MCF 10A (cell line): ENCODE measurements at regions of chr3 and their contacts with region 1.

Region 1: DNA sequence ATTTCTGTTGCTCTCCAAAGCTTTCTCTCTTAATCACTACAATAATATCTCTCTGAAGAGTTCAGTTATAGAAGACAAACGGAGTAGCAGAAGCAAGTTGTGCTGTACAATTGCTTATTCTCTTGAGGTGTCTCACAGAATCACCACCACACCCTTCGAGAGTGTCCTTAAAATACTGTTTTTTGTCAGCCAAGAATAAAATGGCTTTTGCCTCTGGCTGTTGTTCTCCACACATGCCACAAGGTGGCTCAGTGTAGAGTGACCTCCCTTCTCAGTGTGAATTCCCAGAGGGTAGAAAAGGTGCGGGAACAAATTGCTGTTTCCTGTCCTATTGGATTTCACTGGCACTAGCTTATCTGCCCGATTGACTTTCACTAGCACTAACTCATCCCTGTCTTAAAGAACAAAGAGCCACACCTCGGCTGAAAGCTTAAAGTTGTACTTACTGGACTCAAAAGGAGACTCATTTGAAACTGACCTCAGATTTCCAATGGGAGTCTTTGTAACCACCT is 134.2 kb upstream of the SATB1 start:
- DNase-seq: peak; percentile 72
- H3K4me3 Mint-ChIP-seq: no peak overlapping the region
- H3K27ac Mint-ChIP-seq: no peak overlapping the region
- H3K4me1 Mint-ChIP-seq: no peaks in the 10 kb centered on the region
- H3K27me3 Mint-ChIP-seq: peaks cover 45% of the 10 kb centered on the region
- CTCF ChIP-seq: peak; percentile 74

Region 2: DNA sequence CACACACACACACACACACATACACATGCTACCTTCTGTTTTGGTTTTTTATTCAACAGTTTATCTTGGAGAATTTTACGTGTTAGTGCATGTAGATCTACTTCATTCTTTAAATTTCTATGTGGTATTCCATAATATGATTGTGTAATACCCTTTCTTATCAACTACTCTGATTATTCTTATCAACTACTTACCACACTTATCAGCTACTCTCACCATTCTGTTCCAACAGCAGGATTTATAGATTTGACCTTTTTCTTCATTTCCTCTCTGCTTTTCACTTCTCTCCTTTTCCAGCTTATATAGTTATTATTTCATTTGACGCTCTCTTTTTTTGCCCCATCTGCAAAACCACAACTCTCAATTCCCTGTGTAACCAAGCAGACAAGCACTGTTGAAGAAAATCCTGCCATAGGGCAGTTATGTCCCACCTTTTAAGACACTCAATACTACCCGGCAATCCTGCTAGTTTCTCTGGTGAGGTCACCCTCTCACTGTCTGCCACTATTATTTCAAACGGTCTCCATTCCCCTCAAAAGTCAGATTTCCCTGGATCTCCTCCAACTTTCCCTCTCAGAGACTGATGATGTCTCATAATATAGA is 77.3 kb before region 1 on chr3:
- CTCF ChIA-PET with region 1: no interaction called
- POLR2A ChIA-PET with region 1: no interaction called
- intact Hi-C with region 1: no loop called
- DNase-seq: no peak
- H3K4me3 Mint-ChIP-seq: no peak overlapping the region
- H3K27ac Mint-ChIP-seq: peak overlapping the region; percentile 10
- H3K4me1 Mint-ChIP-seq: no peaks in the 10 kb centered on the region
- H3K27me3 Mint-ChIP-seq: peaks cover 30% of the 10 kb centered on the region
- CTCF ChIP-seq: no peak

Region 3: GRCh38 chr3:18527691-18528090 is 31.7 kb before region 1 on chr3:
- CTCF ChIA-PET with region 1: interaction called, 10 read pairs
- POLR2A ChIA-PET with region 1: no interaction called
- intact Hi-C with region 1: no loop called
- DNase-seq: no peak
- H3K4me3 Mint-ChIP-seq: no peak overlapping the region
- H3K27ac Mint-ChIP-seq: no peak overlapping the region
- H3K4me1 Mint-ChIP-seq: no peaks in the 10 kb centered on the region
- H3K27me3 Mint-ChIP-seq: peaks cover 12% of the 10 kb centered on the region
- CTCF ChIP-seq: no peak

Region 4: GRCh38 chr3:18572809-18573208 is 13.4 kb after region 1 on chr3:
- CTCF ChIA-PET with region 1: interaction called, 41 read pairs
- POLR2A ChIA-PET with region 1: no interaction called
- intact Hi-C with region 1: no loop called
- DNase-seq: no peak
- H3K4me3 Mint-ChIP-seq: no peak overlapping the region
- H3K27ac Mint-ChIP-seq: no peak overlapping the region
- H3K4me1 Mint-ChIP-seq: peaks cover 5% of the 10 kb centered on the region
- H3K27me3 Mint-ChIP-seq: peaks cover 15% of the 10 kb centered on the region
- CTCF ChIP-seq: no peak

Region 5: GRCh38 chr3:18758047-18758704 is 198.8 kb after region 1 on chr3:
- CTCF ChIA-PET with region 1: interaction called, 41 read pairs
- POLR2A ChIA-PET with region 1: interaction called, 3 read pairs
- intact Hi-C with region 1: loop called (anchors 1 kb)
- DNase-seq: peak; percentile 80
- H3K4me3 Mint-ChIP-seq: no peak overlapping the region
- H3K27ac Mint-ChIP-seq: no peak overlapping the region
- H3K4me1 Mint-ChIP-seq: no peaks in the 10 kb centered on the region
- H3K27me3 Mint-ChIP-seq: peaks cover 28% of the 10 kb centered on the region
- CTCF ChIP-seq: peak; percentile 54